ENCODE measurements at regions of chr6 and their contacts with region 1.

Region 1: GRCh38 chr6:105389543-105389942 is 13.3 kb downstream of the PREP start:
- DNase-seq: no peak
- H3K4me3 ChIP-seq: no peak overlapping the region
- CTCF ChIP-seq: no peak
- POLR2A ChIP-seq: no peak

Region 2: GRCh38 chr6:104656235-104656634 is 733.3 kb before region 1 on chr6:
- intact Hi-C with region 1: loop called (anchors 5 kb)
- DNase-seq: no peak
- H3K4me3 ChIP-seq: no peak overlapping the region
- CTCF ChIP-seq: no peak
- POLR2A ChIP-seq: no peak

Measured in lower leg skin (tissue), 4 donors.